Gastrocnemius medialis (tissue), 4 donors: ENCODE measurements at regions of chr4 and their contacts with region 1.

Region 1: DNA sequence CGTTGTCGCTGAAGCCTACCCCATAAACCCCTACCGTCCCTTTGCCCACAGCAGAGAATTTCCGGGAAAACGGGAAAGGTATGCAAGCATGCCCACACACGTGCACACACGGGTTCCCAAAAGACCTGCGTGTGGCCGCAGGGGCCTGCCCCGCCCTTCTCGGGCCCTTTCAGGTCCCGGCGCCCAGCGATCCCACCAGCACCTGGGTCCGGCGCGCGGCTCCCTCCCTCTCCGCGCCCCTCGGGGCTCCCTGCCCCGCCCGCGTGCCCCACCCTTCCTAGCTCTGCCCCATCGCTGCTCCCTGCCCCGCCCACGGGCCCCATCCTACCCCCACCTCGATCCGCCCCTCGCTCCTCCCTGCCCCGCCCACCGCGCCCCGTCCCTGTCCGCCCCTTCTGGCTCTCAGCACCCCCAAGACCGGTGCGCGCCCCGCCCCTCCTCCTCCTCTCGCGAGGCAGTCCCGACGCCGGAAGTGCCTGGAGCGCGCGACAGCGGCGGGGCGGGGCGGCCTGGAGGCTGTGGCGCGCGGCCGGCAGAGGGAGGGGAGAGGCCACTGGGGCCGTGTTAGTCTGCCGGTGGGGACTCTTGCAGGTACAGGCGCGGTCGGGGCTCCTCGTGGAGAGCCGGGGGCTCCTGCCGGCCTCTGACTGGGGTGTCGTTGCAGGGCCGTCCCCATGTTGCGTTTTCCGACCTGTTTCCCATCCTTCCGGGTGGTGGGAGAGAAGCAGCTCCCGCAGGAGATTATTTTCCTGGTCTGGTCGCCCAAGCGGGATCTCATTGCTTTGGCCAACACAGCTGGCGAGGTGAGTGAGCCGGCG is at the start of gene ANAPC4:
- DNase-seq: peak; percentile 87 to 91
- ATAC-seq: peak; percentile 81 to 84
- H3K4me3 ChIP-seq: peak within 1 kb of the TSS; percentile 85 to 99 (median 92)
- H3K27ac ChIP-seq: peak within 1 kb of the TSS; percentile 77 to 83 (median 80)
- H3K4me1 ChIP-seq: peaks cover 3 to 8% of the 10 kb centered on the region in 2 donors
- H3K27me3 ChIP-seq: no peaks in the 10 kb centered on the region
- CTCF ChIP-seq: peak in 2 of 5 experiments; percentile 32 to 37
- POLR2A ChIP-seq: peak; percentile 38 to 56
- total RNA-seq, gene ANAPC4: 11.8 to 20.2 (median 14.7) TPM

Region 2: DNA sequence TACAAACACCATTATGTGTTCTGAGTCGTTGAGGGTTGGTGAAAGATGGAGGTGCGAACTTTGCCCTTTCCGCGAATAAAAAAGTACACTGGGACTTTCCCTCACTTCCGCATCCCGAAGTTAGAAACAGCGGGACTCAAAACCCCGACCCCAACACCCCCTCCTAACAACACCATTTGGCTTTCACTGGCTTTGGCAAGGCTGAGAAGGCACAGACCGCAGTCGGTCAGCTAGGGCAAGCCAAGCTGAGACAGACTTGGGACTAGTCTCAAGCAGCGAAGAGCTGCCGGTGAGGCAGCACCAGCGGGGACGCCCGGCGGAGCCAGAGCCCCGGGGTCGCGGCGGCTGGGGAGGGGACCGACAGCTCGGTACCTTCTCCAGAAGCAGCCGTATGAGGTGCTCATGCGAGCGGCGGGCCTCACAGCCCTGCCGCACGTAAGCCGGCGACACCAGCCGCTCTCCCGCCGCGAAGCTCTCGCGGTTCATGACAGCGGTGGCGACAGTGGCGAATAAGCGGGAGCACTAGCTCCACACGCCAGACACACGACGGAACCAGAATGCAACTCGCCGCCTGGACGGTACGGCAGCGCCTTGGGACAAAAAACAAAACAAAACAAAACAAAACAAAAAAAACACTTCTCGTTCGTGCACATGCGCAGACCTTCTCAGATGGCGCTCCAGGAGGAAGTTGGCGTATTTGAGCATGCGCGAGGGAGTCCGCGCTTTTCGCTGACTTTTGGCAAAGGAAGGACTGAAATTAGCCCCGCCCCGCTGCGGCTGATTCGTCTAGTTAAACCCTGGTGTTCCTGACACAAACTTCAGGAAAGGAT is 216.9 kb before region 1 on chr4 and contains the start of gene SEPSECS:
- in situ Hi-C with region 1: no loop called
- intact Hi-C with region 1: loop called (anchors 5 kb)
- DNase-seq: peak; percentile 96 to 97
- ATAC-seq: peak; percentile 97
- H3K4me3 ChIP-seq: peak within 1 kb of the TSS; percentile 78 to 98 (median 82)
- H3K27ac ChIP-seq: peak within 1 kb of the TSS; percentile 91 to 96 (median 93)
- H3K4me1 ChIP-seq: peaks cover 22 to 23% of the 10 kb centered on the region in 2 donors
- H3K27me3 ChIP-seq: no peaks in the 10 kb centered on the region
- CTCF ChIP-seq: no peak
- POLR2A ChIP-seq: peak in 1 of 2 donors; percentile 59
- total RNA-seq, gene SEPSECS: 3.9 to 6.7 (median 4.7) TPM

Region 3: GRCh38 chr4:25312496-25313200 is 64.3 kb before region 1 on chr4 and contains the start of gene ZCCHC4:
- in situ Hi-C with region 1: no loop called
- intact Hi-C with region 1: loop called (anchors 1 kb)
- DNase-seq: peak; percentile 68 to 84
- ATAC-seq: peak; percentile 96 to 99
- H3K4me3 ChIP-seq: peak within 1 kb of the TSS; percentile 70 to 84 (median 74)
- H3K27ac ChIP-seq: peak within 1 kb of the TSS; percentile 64 to 78 (median 73)
- H3K4me1 ChIP-seq: peaks cover 5 to 8% of the 10 kb centered on the region in 2 donors
- H3K27me3 ChIP-seq: no peaks in the 10 kb centered on the region
- CTCF ChIP-seq: peak; percentile 72 to 99 (median 93)
- POLR2A ChIP-seq: no peak
- total RNA-seq, gene ZCCHC4: 6.9 to 14.2 (median 12.4) TPM

Region 4: DNA sequence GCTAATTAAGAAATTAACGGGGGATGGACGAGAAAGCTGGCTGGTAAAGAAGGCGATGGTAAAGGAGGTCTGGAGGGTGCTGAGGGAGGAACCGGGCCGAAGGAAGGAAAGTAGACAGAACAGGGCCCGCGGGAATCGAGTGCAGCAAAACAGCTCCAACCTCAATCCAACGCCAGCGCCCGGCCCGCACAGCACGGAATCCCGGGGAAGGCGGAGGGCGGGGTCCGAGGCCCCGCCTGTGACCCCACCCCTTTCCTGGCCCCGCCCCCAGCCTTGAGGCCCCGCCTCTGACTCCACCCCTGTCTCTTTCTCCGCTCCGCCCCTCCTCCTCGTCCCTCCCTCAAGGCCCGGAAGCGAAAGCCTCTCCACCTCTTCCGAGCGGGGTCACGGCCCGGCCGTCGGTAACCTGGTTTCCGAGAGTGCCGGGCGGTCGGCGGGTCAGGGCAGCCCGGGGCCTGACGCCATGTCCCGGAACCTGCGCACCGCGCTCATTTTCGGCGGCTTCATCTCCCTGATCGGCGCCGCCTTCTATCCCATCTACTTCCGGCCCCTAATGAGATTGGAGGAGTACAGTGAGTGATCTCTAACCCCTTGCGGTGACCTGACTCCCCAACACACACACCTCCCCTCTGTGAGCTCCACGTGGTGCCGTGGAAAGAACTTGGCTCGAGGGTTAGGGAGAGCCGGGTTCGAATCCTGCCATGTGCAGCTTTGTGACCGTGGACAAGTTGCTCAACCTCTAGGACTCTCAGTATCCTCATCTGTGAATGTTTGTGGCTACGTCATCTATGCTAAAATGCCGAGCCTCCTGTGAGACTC is 537.1 kb after region 1 on chr4 and contains the start of gene SMIM20:
- in situ Hi-C with region 1: no loop called
- intact Hi-C with region 1: loop called (anchors 5 kb)
- DNase-seq: peak; percentile 90 to 93
- ATAC-seq: peak; percentile 96 to 97
- H3K4me3 ChIP-seq: peak within 1 kb of the TSS; percentile 72 to 83 (median 76)
- H3K27ac ChIP-seq: peak within 1 kb of the TSS; percentile 87 to 97 (median 90)
- H3K4me1 ChIP-seq: peaks cover 14 to 15% of the 10 kb centered on the region in 2 donors
- H3K27me3 ChIP-seq: no peaks in the 10 kb centered on the region
- CTCF ChIP-seq: no peak
- POLR2A ChIP-seq: peak; percentile 77 to 78
- total RNA-seq, gene SMIM20: 36.4 to 59.4 (median 48.3) TPM